Activated CD8-positive, alpha-beta T cell treated with anti-CD3 and anti-CD28 coated beads for 36 hours (primary cell): ENCODE measurements at regions of chr1 and their contacts with region 1.

Region 1: DNA sequence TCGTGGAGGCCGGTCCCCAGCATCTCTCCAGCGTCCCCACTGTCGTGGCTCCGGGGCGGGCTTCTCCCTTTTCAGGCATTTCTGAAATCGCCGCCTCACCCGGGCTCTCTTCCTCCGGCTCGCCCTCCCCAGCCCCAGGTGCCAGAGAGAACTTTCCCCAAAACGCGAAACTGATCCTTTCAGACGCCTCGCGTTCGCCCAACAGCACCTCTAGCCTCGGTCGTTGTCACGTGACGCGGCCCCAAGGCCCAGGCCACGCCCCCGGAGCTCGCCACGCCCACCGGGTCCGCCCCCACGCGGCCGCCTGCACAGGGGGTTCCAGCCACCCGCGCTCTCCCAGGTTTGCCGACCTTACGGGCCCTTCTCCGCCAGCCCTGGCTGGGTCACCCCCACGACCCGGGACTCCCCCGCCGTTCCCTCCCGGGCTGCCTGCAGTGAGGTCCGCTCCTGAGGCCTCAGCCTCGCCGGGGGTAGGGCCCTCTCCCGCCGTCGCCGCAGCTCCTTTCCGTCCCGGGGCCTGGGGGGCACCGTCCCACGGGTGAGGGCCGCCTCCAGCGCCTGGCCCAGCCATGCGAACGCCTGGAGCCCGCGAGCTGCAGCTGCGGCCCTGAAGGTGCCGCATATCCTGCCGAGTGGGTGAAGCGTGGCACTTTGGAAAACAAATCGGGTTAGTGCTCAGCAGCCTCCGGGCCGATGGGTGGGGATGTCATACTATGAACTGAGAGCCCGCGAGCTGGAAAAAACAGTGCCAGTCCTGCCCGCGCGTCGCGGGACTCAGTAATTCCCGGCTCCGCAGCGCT is 21.0 kb downstream of the H3-3A start:
- DNase-seq: peak; percentile 94
- ATAC-seq: peak; percentile 96
- H3K4me3 Mint-ChIP-seq: peak overlapping the region; percentile 86
- H3K27ac Mint-ChIP-seq: peak overlapping the region; percentile 81
- H3K4me1 Mint-ChIP-seq: peaks cover 8% of the 10 kb centered on the region
- H3K27me3 Mint-ChIP-seq: no peaks in the 10 kb centered on the region
- CTCF ChIP-seq: no peak

Region 2: GRCh38 chr1:226069811-226070489 is 13.6 kb before region 1 on chr1:
- CTCF ChIA-PET with region 1: interaction called, 22 read pairs
- POLR2A ChIA-PET with region 1: interaction called, 18 read pairs
- intact Hi-C with region 1: no loop called
- DNase-seq: peak; percentile 12
- ATAC-seq: peak; percentile 74
- H3K4me3 Mint-ChIP-seq: peak overlapping the region; percentile 29
- H3K27ac Mint-ChIP-seq: peak overlapping the region; percentile 85
- H3K4me1 Mint-ChIP-seq: peaks cover 55% of the 10 kb centered on the region
- H3K27me3 Mint-ChIP-seq: no peaks in the 10 kb centered on the region
- CTCF ChIP-seq: no peak